PC-9 (cell line): ENCODE measurements at regions of chr1 and their contacts with region 1.

Region 1: GRCh38 chr1:54227091-54227602 is 27.2 kb downstream of the MRPL37 start:
- DNase-seq: peak; percentile 48 to 84
- H3K4me3 ChIP-seq: no peak overlapping the region
- H3K27ac ChIP-seq: no peak overlapping the region
- H3K4me1 ChIP-seq: 0 out of 2 replicates have a peak, but pooled peaks cover 5% of the 10 kb centered on the region
- H3K27me3 ChIP-seq: no peaks in the 10 kb centered on the region
- CTCF ChIP-seq: no peak

Region 2: DNA sequence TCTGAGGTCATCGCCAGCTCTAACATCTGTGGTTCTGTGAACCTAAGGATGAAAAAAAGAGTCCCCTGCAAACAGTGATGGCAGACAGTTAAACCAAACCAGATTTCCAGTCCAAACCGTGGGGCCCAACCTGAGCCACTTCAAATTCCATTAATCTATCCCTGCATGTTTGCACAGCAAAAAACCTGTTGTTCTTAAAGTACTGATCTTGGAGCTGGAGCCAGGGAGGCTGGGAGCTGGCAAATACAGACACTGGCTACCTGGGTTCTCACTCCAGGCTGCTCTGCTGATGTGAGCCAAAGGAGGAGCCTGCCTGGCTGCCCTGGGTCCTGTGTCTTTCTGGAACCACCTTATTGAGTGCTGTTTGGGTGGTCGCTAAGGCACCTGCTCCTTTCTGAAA is 225.6 kb before region 1 on chr1:
- CTCF ChIA-PET with region 1: no interaction called
- POLR2A ChIA-PET with region 1: no interaction called
- intact Hi-C with region 1: no loop called
- DNase-seq: no peak
- H3K4me3 ChIP-seq: no peak overlapping the region
- H3K27ac ChIP-seq: no peak overlapping the region
- H3K4me1 ChIP-seq: no peaks in the 10 kb centered on the region
- H3K27me3 ChIP-seq: no peaks in the 10 kb centered on the region
- CTCF ChIP-seq: no peak

Region 3: GRCh38 chr1:54121482-54122134 is 105.5 kb before region 1 on chr1:
- CTCF ChIA-PET with region 1: no interaction called
- POLR2A ChIA-PET with region 1: no interaction called
- intact Hi-C with region 1: loop called (anchors 1 kb)
- DNase-seq: peak in 1 of 2 experiments; percentile 85
- H3K4me3 ChIP-seq: no peak overlapping the region
- H3K27ac ChIP-seq: no peak overlapping the region
- H3K4me1 ChIP-seq: no peaks in the 10 kb centered on the region
- H3K27me3 ChIP-seq: peaks cover 12% of the 10 kb centered on the region; the same call in 1 of the 2 replicates
- CTCF ChIP-seq: peak; percentile 73

Region 4: GRCh38 chr1:54158071-54158470 is 69.1 kb before region 1 on chr1:
- CTCF ChIA-PET with region 1: no interaction called
- POLR2A ChIA-PET with region 1: no interaction called
- intact Hi-C with region 1: no loop called
- DNase-seq: peak; percentile 57 to 79
- H3K4me3 ChIP-seq: no peak overlapping the region
- H3K27ac ChIP-seq: no peak overlapping the region
- H3K4me1 ChIP-seq: peaks cover 6% of the 10 kb centered on the region; the same call in 1 of the 2 replicates
- H3K27me3 ChIP-seq: no peaks in the 10 kb centered on the region
- CTCF ChIP-seq: no peak

Region 5: DNA sequence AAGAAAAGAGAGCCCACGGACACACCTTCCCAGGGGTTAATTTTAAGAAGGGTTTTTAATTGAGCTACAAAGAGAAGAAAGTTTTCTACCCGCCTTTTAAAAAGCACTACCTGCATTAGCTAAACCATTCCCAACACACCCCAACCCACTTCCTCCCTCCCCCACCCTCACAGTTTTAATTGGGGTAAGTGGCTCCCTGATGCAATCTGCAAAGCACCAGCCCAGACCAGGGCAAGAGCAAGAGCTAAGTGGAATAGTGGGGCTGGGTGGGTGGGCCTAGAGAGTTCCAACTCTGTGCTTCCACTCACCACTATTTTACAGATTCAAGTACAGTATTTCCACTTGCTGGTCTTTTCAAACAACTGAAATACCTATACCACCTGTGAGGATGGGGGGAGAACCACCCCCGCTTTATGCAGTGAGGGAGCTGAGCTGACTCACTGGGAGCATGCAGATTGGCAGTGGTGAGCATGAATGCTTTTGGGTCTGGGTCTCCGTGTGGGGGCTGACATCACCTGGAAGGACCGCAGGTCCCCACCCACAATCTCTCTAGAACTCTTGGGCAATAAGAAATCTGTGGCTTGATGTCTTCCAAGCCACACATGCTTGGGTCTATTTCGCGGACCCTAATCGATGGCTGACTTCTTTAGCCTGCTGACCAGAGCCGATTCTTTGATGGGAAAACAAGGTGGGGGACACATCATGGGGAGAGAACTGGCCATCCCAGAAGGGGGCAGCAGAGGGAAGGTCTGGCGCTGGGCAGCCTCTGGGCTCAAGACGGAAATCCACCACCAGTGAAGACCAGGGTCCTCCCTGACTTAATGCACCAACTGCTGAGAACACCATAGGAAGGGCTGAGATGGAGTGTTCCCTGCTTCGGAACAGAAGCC is 83.5 kb after region 1 on chr1:
- CTCF ChIA-PET with region 1: interaction called, 14 read pairs
- POLR2A ChIA-PET with region 1: no interaction called
- intact Hi-C with region 1: no loop called
- DNase-seq: no peak
- H3K4me3 ChIP-seq: no peak overlapping the region
- H3K27ac ChIP-seq: no peak overlapping the region
- H3K4me1 ChIP-seq: no peaks in the 10 kb centered on the region
- H3K27me3 ChIP-seq: no peaks in the 10 kb centered on the region
- CTCF ChIP-seq: peak; percentile 51